Activated T-helper 2 cell treated with anti-CD3 and anti-CD28 coated beads, Interferon-gamma antibody, Interleukin-2, Interleukin-4, amounts not matched to agents 10 μg/mL and 5 μg/mL and 100 μg/mL, durations not matched to agents 14 hours and 24 hours and 36 hours (primary cell): ENCODE measurements at regions of chr11 and their contacts with region 1.

Region 1: DNA sequence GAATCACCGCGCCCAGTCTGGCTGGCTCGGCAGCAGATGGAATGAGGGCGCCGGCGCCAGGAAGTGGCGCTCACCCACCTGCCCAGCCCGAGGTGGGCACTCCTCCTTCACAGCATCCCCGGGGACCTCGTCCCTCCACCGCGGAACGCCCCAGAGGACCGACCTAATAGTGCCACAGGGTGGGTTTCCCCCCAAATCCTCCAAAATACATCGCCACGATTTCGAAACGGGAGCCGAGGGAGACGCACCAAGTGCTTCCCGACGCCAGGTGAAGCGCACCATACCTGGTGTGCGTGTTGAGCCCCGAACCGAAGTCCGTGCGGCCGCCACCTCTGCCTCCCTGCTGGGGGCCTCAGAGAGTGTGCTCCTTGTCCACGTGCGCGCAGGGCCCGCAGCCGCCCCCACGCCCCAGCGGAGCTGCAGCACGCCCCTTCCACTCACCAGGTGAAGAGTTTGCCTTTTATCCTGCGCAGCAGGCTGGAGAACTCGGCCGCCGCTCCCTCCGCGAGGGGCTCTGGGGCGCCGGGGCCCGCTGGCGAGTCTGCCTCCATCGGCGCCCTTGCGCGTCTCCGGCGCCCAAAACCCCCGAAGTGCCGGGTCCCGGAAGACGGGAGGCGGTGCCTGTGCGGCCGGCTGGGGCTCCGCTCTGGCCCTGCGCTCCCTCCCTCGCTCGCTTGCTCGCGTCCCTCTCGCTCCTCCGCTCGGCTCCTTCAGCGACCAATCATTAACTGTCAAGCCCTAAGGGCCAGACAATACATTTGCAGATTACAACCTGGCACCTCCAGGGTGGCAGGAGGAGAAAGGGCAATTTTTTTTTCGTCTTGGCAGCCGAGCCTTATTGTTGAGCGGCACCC is at the start of gene SLC35F2:
- DNase-seq: peak; percentile 62
- H3K4me3 Mint-ChIP-seq: peak within 1 kb of the TSS; percentile 96
- H3K27ac Mint-ChIP-seq: peak within 1 kb of the TSS; percentile 89
- H3K4me1 Mint-ChIP-seq: peaks cover 20% of the 10 kb centered on the region
- H3K27me3 Mint-ChIP-seq: peaks cover 8% of the 10 kb centered on the region
- total RNA-seq, gene SLC35F2: 28.0 and 29.8 TPM in 2 replicates

Region 2: GRCh38 chr11:107457558-107458271 is 400.7 kb before region 1 on chr11 and contains the start of gene CWF19L2:
- intact Hi-C with region 1: loop called (anchors 1 kb)
- DNase-seq: peak; percentile 86
- H3K4me3 Mint-ChIP-seq: peak within 1 kb of the TSS; percentile 93
- H3K27ac Mint-ChIP-seq: peak within 1 kb of the TSS; percentile 87
- H3K4me1 Mint-ChIP-seq: peaks cover 19% of the 10 kb centered on the region
- H3K27me3 Mint-ChIP-seq: no peaks in the 10 kb centered on the region
- total RNA-seq, gene CWF19L2: 14.6 and 14.8 TPM in 2 replicates

Region 3: GRCh38 chr11:107799218-107799859 is 59.1 kb before region 1 on chr11:
- intact Hi-C with region 1: loop called (anchors 5 kb)
- DNase-seq: peak; percentile 49
- H3K4me3 Mint-ChIP-seq: no peak overlapping the region
- H3K27ac Mint-ChIP-seq: peak overlapping the region; percentile 28
- H3K4me1 Mint-ChIP-seq: peaks cover 3% of the 10 kb centered on the region
- H3K27me3 Mint-ChIP-seq: no peaks in the 10 kb centered on the region

Region 4: DNA sequence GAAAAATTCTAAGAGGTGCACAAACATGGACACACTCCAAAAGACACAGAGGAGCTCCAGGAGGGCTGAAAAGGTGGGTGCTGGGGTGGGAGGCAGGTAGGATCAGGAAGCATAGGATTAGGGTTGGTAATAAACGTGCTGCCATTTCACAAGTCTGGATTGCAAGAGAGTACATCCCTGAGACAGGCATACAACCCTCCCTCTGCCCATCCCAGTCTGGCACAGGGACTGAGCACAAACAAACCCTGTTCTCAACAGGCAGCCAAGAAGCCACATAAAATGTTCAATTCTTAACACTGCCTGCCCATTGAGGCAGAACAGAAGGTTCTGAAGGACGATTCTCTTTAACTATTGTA is 18.3 kb before region 1 on chr11:
- intact Hi-C with region 1: loop called (anchors 1 kb)
- DNase-seq: no peak
- H3K4me3 Mint-ChIP-seq: no peak overlapping the region
- H3K27ac Mint-ChIP-seq: peak overlapping the region; percentile 96
- H3K4me1 Mint-ChIP-seq: peaks cover 57% of the 10 kb centered on the region
- H3K27me3 Mint-ChIP-seq: no peaks in the 10 kb centered on the region

Region 5: DNA sequence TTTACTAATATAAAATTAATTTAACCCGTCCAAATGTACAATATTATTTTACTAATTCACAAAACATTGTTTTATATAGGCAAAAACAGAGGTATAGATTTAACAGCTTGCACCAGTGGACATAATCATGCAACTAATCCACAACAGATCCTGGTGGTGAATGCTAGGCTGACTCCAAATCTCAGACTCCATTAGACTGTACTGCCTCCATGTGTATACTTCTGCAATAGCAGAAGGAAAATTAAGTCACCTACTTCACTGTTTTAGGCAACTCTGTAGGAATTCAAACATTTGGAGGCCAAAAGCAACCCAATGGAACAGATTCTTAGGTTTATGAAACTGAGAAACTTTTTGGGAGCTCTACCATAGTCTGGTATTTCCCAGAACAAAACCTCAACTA is 39.8 kb after region 1 on chr11:
- intact Hi-C with region 1: no loop called
- DNase-seq: no peak
- H3K4me3 Mint-ChIP-seq: no peak overlapping the region
- H3K27ac Mint-ChIP-seq: no peak overlapping the region
- H3K4me1 Mint-ChIP-seq: no peaks in the 10 kb centered on the region
- H3K27me3 Mint-ChIP-seq: peaks cover 5% of the 10 kb centered on the region

Region 6: DNA sequence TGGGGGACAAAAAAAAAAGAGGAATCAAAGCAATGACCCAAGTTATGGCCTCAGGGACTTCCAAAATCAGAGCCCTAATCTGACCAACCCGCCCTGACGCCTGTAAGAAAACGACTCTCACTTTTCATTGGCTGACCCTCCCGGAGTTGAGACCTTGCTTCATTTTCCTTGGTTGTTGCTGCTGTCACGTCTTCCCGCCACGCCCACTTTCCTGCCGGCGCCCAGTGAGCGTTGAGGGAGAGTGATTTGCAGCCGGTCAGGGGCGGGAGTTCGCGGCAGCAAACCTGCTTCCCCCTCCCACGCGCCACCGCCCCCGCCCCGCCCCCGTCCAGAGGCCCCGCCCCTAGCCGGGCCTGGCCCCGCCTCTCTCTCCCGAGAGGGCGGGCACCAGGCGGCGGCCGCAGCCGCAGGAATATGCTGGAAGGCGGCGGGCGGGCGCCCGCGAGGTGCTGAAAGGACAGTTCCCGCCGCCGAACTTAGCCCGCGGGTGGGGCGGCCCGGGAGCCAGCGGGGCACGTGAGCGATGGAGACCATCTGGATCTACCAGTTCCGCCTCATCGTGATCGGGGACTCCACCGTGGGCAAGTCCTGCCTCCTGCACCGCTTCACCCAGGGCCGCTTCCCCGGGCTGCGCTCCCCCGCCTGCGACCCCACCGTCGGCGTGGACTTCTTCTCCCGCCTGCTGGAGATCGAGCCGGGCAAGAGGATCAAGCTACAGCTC is 69.8 kb after region 1 on chr11 and contains the start of gene RAB39A:
- intact Hi-C with region 1: loop called (anchors 1 kb)
- DNase-seq: peak; percentile 73
- H3K4me3 Mint-ChIP-seq: peak within 1 kb of the TSS; percentile 71
- H3K27ac Mint-ChIP-seq: no peak within 1 kb of the TSS
- H3K4me1 Mint-ChIP-seq: peaks cover 8% of the 10 kb centered on the region
- H3K27me3 Mint-ChIP-seq: peaks cover 31% of the 10 kb centered on the region
- total RNA-seq, gene RAB39A: not detected in 2 replicates

Region 7: DNA sequence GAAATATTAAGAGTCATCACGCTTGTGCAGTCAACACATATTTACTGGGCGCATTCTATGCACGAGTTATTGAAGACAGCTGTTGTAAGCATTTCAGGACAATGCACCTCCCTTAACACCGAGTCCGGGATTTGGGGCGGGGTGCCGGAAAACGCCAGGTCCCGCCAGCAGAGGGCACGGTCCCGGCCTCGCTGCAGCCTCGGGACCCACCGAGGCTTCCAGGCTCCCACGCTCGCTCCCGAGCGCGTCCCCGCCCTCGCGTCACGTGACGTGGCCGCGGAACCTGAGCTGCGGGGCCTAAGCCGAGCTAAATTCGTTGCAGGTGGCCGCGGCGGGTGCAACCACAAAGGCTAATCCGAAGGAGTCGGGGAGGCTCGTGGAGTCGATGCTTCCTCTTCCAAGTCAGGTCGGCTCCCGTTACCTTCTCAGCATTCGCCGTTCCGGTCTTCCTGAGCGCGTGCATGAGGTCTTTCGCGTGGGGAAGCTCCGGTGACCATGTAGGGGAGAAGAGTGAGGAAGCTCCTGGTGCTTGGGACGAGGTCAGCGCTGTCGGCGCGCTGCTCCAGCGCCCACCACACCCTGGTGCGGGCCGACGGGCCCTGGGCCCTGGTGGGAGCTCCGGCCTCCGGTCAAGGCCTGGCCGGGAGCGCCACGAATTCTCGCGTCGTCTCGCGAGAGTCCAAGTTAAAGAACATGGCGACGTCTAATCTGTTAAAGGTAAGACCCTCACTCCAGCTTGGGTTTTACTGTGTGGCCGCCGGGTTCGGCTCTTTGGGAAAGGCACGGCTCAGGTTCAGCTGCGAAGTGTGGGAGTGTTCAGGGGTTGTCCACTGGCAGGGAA is 150.4 kb after region 1 on chr11 and contains the start of gene CUL5:
- intact Hi-C with region 1: loop called (anchors 1 kb)
- DNase-seq: peak; percentile 86
- H3K4me3 Mint-ChIP-seq: peak within 1 kb of the TSS; percentile 91
- H3K27ac Mint-ChIP-seq: peak within 1 kb of the TSS; percentile 94
- H3K4me1 Mint-ChIP-seq: peaks cover 16% of the 10 kb centered on the region
- H3K27me3 Mint-ChIP-seq: no peaks in the 10 kb centered on the region
- total RNA-seq, gene CUL5: 33.7 and 34.2 TPM in 2 replicates